Heart right ventricle (tissue), 16 donors: ENCODE measurements at regions of chr3 and their contacts with region 1.

Region 1: DNA sequence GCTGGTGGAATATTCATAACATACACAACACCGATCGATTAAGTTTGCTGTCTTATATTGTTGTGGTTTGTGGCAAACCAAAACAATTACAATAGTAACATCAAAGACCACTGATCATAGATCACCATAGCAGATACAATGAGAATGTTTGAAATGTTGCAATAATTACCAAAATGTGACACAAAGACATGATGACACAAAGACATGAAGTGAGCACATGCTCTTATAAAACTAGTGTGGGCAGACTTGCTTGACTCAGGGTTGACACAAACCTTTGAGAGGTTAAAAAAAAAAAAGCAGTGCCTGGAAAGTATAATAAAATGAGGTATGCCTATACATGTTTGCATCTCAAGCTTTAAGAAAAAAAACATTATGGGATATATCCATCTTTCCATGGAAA is 130.3 kb downstream of the NR1I2 start:
- DNase-seq: no peak
- ATAC-seq: no peak
- H3K4me3 ChIP-seq: no peak overlapping the region
- H3K27ac ChIP-seq: no peak overlapping the region
- H3K4me1 ChIP-seq: peaks cover 0 to 34% (median 13%) of the 10 kb centered on the region in 9 donors
- H3K27me3 ChIP-seq: no peaks in the 10 kb centered on the region
- CTCF ChIP-seq: no peak

Region 2: GRCh38 chr3:119861681-119862080 is 50.5 kb before region 1 on chr3:
- intact Hi-C with region 1: no loop called
- DNase-seq: no peak
- ATAC-seq: no peak
- H3K4me3 ChIP-seq: no peak overlapping the region
- H3K27ac ChIP-seq: no peak overlapping the region
- H3K4me1 ChIP-seq: peaks cover 0 to 13% (median 4%) of the 10 kb centered on the region in 9 donors
- H3K27me3 ChIP-seq: no peaks in the 10 kb centered on the region
- CTCF ChIP-seq: no peak

Region 3: GRCh38 chr3:120088622-120089021 is 176.4 kb after region 1 on chr3:
- intact Hi-C with region 1: loop called in 2 of 10 experiments (anchors 5 kb)
- DNase-seq: no peak
- ATAC-seq: no peak
- H3K4me3 ChIP-seq: peak overlapping the region in 1 of 10 donors; percentile 77
- H3K27ac ChIP-seq: no peak overlapping the region
- H3K4me1 ChIP-seq: peaks cover 0 to 62% (median 46%) of the 10 kb centered on the region in 9 donors
- H3K27me3 ChIP-seq: no peaks in the 10 kb centered on the region
- CTCF ChIP-seq: no peak